ENCODE measurements at regions of chr9 and their contacts with region 1.

Region 1: GRCh38 chr9:106025453-106025852 is 331.1 kb downstream of the TMEM38B start:
- DNase-seq: peak in 1 of 2 donors; percentile 50
- ATAC-seq: peak in 2 of 4 donors; percentile 61 to 78
- H3K4me3 ChIP-seq: no peak overlapping the region
- H3K27ac ChIP-seq: no peak overlapping the region
- H3K4me1 ChIP-seq: no peaks in the 10 kb centered on the region
- H3K27me3 ChIP-seq: no peaks in the 10 kb centered on the region
- CTCF ChIP-seq: no peak

Region 2: GRCh38 chr9:105858006-105858690 is 167.3 kb before region 1 on chr9:
- intact Hi-C with region 1: no loop called
- DNase-seq: no peak
- ATAC-seq: no peak
- H3K4me3 ChIP-seq: no peak overlapping the region
- H3K27ac ChIP-seq: no peak overlapping the region
- H3K4me1 ChIP-seq: peaks cover 15% of the 10 kb centered on the region
- H3K27me3 ChIP-seq: no peaks in the 10 kb centered on the region
- CTCF ChIP-seq: no peak

Region 3: GRCh38 chr9:105967798-105968197 is 57.7 kb before region 1 on chr9:
- intact Hi-C with region 1: no loop called
- DNase-seq: no peak
- ATAC-seq: no peak
- H3K4me3 ChIP-seq: no peak overlapping the region
- H3K27ac ChIP-seq: no peak overlapping the region
- H3K4me1 ChIP-seq: peaks cover 4% of the 10 kb centered on the region
- H3K27me3 ChIP-seq: no peaks in the 10 kb centered on the region
- CTCF ChIP-seq: no peak

Region 4: GRCh38 chr9:106846857-106847256 is 821.4 kb after region 1 on chr9:
- intact Hi-C with region 1: loop called in 1 of 2 experiments (anchors 10 kb)
- DNase-seq: no peak
- ATAC-seq: no peak
- H3K4me3 ChIP-seq: no peak overlapping the region
- H3K27ac ChIP-seq: no peak overlapping the region
- H3K4me1 ChIP-seq: no peaks in the 10 kb centered on the region
- H3K27me3 ChIP-seq: no peaks in the 10 kb centered on the region
- CTCF ChIP-seq: no peak